ENCODE measurements at regions of chr3 and their contacts with region 1.

Region 1: DNA sequence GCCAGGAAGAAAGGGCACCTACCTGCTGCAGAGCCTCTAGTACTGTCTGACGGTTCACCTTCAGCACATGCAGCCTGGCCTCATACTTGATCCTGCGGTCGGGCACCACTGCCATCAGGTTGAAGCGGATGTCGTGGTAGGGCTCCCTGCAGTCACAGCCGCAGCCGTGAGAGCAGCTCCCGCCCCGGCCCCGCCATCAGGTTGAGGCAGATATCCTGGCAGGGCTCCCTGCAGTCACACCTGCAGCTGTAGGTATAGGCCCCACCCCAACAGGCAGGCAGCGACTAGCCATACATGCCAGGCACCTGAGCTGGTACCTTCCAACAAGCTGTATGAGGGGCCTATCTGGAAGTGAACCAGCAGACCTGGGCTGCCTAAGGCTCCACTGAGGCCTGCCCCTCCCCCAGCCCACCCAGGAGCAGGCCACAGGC is 38.7 kb downstream of the SEMA3G start:
- DNase-seq: no peak
- H3K4me3 ChIP-seq: no peak overlapping the region
- H3K27ac ChIP-seq: no peak overlapping the region
- H3K4me1 ChIP-seq: peaks cover 0 to 5% of the 10 kb centered on the region in 2 donors
- H3K27me3 ChIP-seq: no peaks in the 10 kb centered on the region
- CTCF ChIP-seq: no peak
- POLR2A ChIP-seq: no peak

Region 2: DNA sequence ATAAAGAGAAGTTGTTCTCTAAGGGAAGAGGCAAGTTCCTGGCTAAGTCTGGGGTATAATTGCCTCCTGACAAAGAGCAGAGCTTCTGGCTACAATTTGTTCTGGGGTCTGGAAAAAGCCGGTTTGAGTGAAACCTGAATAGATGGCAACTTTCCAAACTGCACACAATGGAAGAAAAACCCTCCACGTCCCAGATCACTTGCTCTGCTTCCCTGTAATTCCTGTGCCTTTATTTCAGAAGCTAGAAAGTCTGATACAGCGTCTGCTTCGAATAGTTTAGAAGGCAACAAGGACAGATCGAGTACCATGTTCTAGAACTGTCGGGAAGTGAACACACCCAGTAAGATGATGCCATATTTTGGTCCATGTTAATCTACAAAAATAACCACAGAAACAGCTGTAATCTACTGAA is 126.2 kb before region 1 on chr3:
- intact Hi-C with region 1: loop called (anchors 5 kb)
- DNase-seq: no peak
- H3K4me3 ChIP-seq: no peak overlapping the region
- H3K27ac ChIP-seq: peak overlapping the region; percentile 93 to 97
- H3K4me1 ChIP-seq: peaks cover 4 to 5% of the 10 kb centered on the region in 2 donors
- H3K27me3 ChIP-seq: no peaks in the 10 kb centered on the region
- CTCF ChIP-seq: no peak
- POLR2A ChIP-seq: no peak

Region 3: GRCh38 chr3:52346623-52347530 is 59.4 kb before region 1 on chr3:
- intact Hi-C with region 1: no loop called
- DNase-seq: no peak
- H3K4me3 ChIP-seq: no peak overlapping the region
- H3K27ac ChIP-seq: no peak overlapping the region
- H3K4me1 ChIP-seq: no peaks in the 10 kb centered on the region
- H3K27me3 ChIP-seq: no peaks in the 10 kb centered on the region
- CTCF ChIP-seq: no peak
- POLR2A ChIP-seq: no peak